ENCODE measurements at regions of chr11 and their contacts with region 1.

Region 1: GRCh38 chr11:69683764-69684333 is 8.7 kb upstream of the LTO1 start:
- DNase-seq: peak; percentile 20
- H3K4me3 Mint-ChIP-seq: no peak overlapping the region
- H3K27ac Mint-ChIP-seq: no peak overlapping the region
- H3K4me1 Mint-ChIP-seq: peaks cover 6% of the 10 kb centered on the region
- H3K27me3 Mint-ChIP-seq: peaks cover 4% of the 10 kb centered on the region

Region 2: DNA sequence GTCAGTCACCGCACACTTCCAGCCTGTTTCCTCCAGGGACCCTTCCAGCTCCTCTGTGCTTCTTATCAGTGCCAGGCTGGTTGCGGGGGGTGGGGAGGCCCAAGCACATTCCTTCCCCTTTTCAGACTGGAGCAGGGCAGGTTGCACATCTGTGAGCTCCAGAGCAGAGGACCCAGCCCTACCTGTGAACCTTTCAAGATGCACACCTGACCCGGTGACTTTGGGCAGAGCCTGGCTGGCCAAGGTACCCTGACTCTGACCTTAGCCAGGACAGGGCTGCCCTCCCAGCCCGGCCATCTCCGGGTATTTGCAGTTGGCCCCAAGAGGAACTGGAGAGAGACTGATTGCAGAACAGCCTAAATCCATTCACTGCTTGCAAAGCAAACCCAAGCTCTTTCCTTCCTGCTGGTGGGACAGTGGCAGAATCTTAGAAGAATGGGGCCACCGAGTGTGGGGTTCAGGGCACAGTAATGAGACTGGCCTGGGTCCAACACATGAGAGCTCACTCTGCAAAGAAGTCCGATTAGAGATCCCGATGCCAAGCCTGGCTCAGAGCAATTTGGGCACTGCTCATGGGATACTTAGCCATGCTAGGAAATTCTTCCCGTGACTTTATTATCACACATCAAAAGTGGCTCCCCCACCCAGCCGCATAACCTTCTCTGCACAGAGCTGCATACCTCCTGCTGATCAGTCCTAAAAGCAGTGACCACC is 107.6 kb before region 1 on chr11:
- CTCF ChIA-PET with region 1: no interaction called
- intact Hi-C with region 1: no loop called
- DNase-seq: no peak
- H3K4me3 Mint-ChIP-seq: no peak overlapping the region
- H3K27ac Mint-ChIP-seq: no peak overlapping the region
- H3K4me1 Mint-ChIP-seq: no peaks in the 10 kb centered on the region
- H3K27me3 Mint-ChIP-seq: peaks cover 20% of the 10 kb centered on the region

Region 3: GRCh38 chr11:69801519-69802335 is 117.9 kb after region 1 on chr11:
- CTCF ChIA-PET with region 1: no interaction called
- intact Hi-C with region 1: loop called (anchors 2 kb)
- DNase-seq: peak; percentile 45
- H3K4me3 Mint-ChIP-seq: no peak overlapping the region
- H3K27ac Mint-ChIP-seq: no peak overlapping the region
- H3K4me1 Mint-ChIP-seq: no peaks in the 10 kb centered on the region
- H3K27me3 Mint-ChIP-seq: no peaks in the 10 kb centered on the region

Region 4: DNA sequence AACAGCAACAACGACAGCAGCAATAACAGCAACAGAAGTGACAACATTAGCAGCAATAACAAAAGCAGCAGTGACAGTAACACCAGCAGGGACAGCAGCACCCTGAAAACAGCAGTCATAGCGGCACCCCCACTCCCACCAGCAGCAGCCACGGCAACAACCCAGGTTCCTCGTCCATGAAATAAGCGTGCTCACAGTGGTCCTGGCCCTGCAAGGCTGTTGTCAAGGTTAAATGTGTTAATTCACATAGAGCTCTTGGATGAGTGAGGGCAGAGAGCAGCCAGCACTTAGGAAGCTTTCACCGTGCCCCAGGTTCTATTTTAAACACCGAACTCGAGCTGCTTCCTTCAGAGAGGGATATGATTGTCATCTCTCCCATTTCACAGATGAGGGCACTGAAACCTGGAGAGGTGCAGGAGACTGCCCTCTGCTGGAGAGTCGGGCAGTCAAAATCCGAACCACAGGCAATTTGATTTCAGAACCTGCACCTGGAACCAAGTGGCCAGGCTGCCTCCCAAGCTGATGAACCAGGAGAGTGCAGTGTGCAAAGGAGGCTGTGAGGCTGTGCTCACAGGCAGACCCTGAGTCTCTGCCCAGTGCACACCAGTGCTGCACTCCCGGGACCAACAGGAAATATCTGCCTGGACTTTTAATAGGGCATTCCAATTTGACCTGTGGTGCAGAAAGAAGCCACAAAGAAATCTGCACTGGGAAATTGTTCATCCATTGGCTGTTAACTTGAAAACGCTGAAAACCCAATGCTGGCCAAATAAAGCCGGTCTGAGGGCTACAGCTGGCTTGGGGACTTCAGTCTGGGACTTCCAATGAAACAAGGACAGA is 158.2 kb after region 1 on chr11:
- CTCF ChIA-PET with region 1: no interaction called
- intact Hi-C with region 1: loop called (anchors 5 kb)
- DNase-seq: peak; percentile 46
- H3K4me3 Mint-ChIP-seq: no peak overlapping the region
- H3K27ac Mint-ChIP-seq: no peak overlapping the region
- H3K4me1 Mint-ChIP-seq: no peaks in the 10 kb centered on the region
- H3K27me3 Mint-ChIP-seq: peaks cover 13% of the 10 kb centered on the region

Region 5: DNA sequence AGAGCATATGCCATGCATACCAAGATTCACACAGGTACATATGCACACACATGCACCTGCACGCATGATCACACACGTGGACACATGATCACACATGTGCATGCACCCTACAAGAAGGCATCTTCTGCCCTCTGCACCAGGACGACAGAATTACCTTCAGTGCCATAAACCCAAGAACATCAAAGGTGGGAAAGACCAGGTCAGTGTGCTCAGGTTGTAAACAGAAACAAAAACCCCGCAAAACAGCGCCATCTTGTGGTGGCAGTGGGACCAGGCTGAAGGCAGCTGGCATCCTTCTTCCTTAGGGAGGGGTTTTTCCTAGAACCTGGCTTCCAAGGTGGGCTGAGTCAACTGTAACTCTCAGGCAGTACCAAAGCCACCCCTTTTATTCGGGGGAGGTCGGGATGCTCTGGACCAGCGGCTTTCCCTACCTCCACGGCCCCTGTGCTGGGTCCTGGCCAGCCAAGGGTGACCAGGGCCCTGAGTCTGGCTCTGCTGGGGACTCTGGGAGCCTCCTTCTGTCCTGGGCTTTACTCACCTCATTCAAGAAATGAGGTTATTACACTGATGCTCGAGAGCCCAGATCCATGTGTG is 204.7 kb after region 1 on chr11:
- CTCF ChIA-PET with region 1: no interaction called
- intact Hi-C with region 1: loop called (anchors 1 kb)
- DNase-seq: peak; percentile 81
- H3K4me3 Mint-ChIP-seq: no peak overlapping the region
- H3K27ac Mint-ChIP-seq: no peak overlapping the region
- H3K4me1 Mint-ChIP-seq: peaks cover 3% of the 10 kb centered on the region
- H3K27me3 Mint-ChIP-seq: peaks cover 26% of the 10 kb centered on the region

Region 6: GRCh38 chr11:69918938-69919650 is 235.2 kb after region 1 on chr11:
- CTCF ChIA-PET with region 1: no interaction called
- intact Hi-C with region 1: loop called (anchors 10 kb)
- DNase-seq: peak; percentile 73
- H3K4me3 Mint-ChIP-seq: no peak overlapping the region
- H3K27ac Mint-ChIP-seq: no peak overlapping the region
- H3K4me1 Mint-ChIP-seq: no peaks in the 10 kb centered on the region
- H3K27me3 Mint-ChIP-seq: peaks cover 29% of the 10 kb centered on the region

Region 7: GRCh38 chr11:70191495-70192140 is 507.8 kb after region 1 on chr11:
- CTCF ChIA-PET with region 1: no interaction called
- intact Hi-C with region 1: loop called (anchors 1 kb)
- DNase-seq: peak; percentile 74
- H3K4me3 Mint-ChIP-seq: no peak overlapping the region
- H3K27ac Mint-ChIP-seq: no peak overlapping the region
- H3K4me1 Mint-ChIP-seq: peaks cover 5% of the 10 kb centered on the region
- H3K27me3 Mint-ChIP-seq: no peaks in the 10 kb centered on the region

Measured in activated naive CD4-positive, alpha-beta T cell treated with anti-CD3 and anti-CD28 coated beads for 36 hours (primary cell).